Activated naive CD4-positive, alpha-beta T cell treated with anti-CD3 and anti-CD28 coated beads for 36 hours (primary cell): ENCODE measurements at regions of chr19 and their contacts with region 1.

Region 1: DNA sequence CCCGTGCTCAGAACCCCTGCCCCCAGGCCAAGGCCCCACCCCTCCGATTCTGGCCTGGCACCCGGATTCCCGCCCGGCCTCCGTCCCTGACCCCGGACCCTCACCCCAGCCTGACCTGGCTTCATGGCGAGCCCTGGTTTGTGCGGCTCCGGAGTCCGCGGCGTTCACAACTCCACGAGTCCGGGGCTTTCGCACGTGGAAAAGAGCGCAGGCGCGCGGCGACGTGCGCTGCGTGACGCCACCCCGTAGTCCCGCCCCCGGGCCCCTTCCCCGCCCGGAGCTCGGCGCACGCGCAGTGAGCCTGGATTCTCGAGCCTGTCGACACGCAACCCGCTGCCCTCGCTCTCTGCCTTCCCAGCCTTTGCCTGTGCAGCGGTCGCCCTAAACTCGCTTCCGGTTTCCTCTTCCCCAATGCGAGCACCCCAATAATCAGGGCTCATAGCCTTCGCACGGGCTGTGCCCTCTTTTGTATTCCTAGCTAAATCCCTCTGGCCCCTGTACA is at the start of gene FBL:
- DNase-seq: peak; percentile 98
- H3K4me3 Mint-ChIP-seq: peak within 1 kb of the TSS; percentile 91
- H3K27ac Mint-ChIP-seq: peak within 1 kb of the TSS; percentile 88
- H3K4me1 Mint-ChIP-seq: peaks cover 38% of the 10 kb centered on the region
- H3K27me3 Mint-ChIP-seq: no peaks in the 10 kb centered on the region
- total RNA-seq, gene FBL: 742 to 785 TPM

Region 2: DNA sequence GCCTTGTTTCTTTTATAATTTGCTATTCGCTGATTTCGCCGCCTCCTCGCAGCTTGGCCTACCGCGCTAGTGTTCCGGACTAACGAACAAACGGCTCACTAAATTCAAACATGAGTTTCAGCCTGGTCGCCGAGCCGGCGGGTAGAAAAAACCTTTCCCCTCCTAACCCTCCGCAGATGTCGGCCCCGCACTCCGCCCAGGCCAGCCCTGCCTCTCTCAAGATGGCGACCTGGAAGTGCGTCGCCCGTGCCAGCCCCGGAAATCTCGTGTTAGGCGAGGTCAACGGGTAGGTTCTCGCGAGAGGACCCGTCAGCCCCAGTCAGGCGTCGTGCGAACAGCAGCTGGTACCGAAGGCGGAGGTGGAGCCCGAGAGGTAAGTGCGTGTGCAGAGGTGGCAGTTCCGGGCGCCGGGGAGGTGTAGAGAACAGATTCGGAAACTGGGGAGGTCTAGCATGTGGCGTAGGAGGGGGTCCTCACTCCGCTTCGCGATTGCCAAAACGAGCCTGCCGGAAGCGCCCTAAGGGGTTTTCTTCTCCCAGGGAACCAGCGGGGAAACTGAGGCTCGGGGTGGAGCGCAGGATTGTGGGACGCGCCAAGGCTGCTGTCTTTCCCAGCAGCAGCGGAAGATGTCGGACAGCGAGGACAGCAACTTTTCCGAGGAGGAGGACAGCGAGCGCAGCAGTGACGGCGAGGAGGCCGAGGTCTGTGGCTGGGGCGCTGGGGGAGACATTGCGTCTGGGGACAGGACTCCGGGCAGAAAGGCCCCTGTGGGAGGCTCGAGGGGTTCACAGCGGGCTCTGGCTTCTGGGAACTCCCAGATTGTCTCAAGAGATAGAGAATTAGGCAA is 400.7 kb before region 1 on chr19 and contains the start of gene SUPT5H:
- CTCF ChIA-PET with region 1: no interaction called
- intact Hi-C with region 1: loop called (anchors 10 kb)
- DNase-seq: peak; percentile 99
- H3K4me3 Mint-ChIP-seq: peak within 1 kb of the TSS; percentile 99
- H3K27ac Mint-ChIP-seq: peak within 1 kb of the TSS; percentile 96
- H3K4me1 Mint-ChIP-seq: peaks cover 49% of the 10 kb centered on the region
- H3K27me3 Mint-ChIP-seq: no peaks in the 10 kb centered on the region
- total RNA-seq, gene SUPT5H: 129 to 139 TPM

Region 3: DNA sequence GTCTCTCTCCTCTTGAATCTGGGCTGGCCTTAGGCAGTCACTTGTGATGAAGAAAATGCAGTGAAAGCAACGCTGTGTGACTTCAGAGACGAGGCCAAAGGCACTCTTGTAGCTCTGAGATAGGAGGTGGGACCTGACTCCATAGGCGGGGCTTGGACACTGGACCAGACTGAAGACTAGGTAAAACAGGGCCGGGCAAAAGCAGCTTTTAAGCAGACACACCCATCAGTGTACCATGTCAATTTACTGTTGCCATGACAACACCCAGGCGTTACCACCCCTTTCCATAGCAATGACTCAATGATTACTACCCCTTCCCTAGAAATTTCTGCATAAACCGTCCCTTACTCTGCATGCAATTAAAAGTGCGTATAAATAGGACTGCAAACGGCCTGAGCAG is 299.6 kb before region 1 on chr19:
- CTCF ChIA-PET with region 1: interaction called, 13 read pairs
- intact Hi-C with region 1: loop called (anchors 10 kb)
- DNase-seq: no peak
- H3K4me3 Mint-ChIP-seq: no peak overlapping the region
- H3K27ac Mint-ChIP-seq: no peak overlapping the region
- H3K4me1 Mint-ChIP-seq: peaks cover 45% of the 10 kb centered on the region
- H3K27me3 Mint-ChIP-seq: no peaks in the 10 kb centered on the region

Region 4: DNA sequence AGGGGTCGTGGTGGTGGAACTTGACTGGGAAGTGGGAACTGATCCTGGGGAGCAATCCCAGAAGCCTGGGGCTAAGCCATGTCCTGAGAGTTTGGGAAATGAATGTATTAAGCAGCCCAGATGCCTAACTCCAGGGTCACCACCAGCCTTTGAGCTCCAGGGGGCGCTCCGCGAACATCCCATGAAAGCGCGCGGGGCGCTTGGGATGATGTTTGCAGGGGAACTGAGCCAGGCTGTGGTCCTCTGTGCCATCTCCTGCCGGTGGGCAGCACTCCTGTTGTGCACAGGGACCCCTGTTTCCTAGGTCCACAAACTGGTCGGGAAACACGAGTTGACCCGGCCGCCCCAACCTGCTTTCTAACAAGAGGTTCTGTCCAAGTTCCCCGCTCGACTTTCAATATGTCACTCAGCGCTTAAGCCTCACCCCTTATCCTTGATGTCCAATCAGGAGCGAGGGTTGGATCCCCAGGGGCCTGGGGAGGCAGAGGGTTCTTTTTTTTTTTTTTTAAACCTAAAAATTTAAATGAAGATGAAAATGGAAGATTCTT is 53.2 kb before region 1 on chr19:
- CTCF ChIA-PET with region 1: interaction called, 31 read pairs
- intact Hi-C with region 1: loop called (anchors 1 kb)
- DNase-seq: peak; percentile 85
- H3K4me3 Mint-ChIP-seq: peak overlapping the region; percentile 73
- H3K27ac Mint-ChIP-seq: no peak overlapping the region
- H3K4me1 Mint-ChIP-seq: no peaks in the 10 kb centered on the region
- H3K27me3 Mint-ChIP-seq: peaks cover 2% of the 10 kb centered on the region

Region 5: GRCh38 chr19:39858541-39858940 is 12.3 kb after region 1 on chr19:
- CTCF ChIA-PET with region 1: interaction called, 3 read pairs
- intact Hi-C with region 1: loop called (anchors 1 kb)
- DNase-seq: peak; percentile 82
- H3K4me3 Mint-ChIP-seq: peak overlapping the region; percentile 72
- H3K27ac Mint-ChIP-seq: peak overlapping the region; percentile 79
- H3K4me1 Mint-ChIP-seq: peaks cover 4% of the 10 kb centered on the region
- H3K27me3 Mint-ChIP-seq: no peaks in the 10 kb centered on the region

Region 6: DNA sequence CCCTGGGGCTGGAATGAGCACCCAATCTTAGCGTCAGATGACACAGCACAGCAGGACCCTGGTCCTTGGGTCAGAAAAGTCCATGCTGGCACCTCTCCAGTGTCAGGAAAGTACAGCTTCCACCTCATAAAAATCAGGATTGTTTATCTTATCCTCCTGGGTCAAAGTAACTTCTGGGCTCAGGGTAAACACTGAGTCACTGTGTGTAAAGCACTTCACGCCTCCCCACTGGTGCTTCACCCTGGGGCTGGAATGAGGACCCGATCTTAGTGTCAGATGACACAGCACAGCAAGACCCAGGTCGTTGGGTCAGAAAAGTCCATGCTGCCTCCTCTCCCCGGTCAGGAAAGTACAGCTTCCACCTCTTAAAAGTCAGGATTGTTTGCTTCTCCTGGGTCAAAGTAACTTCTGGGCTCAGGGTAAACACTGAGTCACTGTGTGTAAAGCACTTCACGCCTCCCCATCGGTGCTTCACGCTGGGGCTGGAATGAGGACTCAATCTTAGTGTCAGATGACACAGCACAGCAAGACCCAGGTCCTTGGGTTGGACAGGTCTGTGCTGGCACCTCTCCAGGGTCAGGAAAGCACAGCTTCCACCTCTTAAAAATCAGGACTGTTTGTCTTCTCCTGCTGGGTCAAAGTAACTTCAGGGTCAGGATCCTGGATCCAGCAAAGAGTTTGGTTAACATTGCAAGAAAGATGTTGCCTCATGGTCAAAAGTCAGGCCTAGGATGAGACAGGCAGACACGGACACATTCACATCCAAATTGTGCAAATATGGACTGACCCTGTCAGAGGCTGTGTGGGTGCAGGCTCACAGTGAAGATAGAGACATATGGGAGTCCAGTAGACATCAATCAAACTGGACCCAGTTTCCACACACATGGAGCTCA is 1075.0 kb after region 1 on chr19:
- CTCF ChIA-PET with region 1: no interaction called
- intact Hi-C with region 1: no loop called
- DNase-seq: no peak
- H3K4me3 Mint-ChIP-seq: no peak overlapping the region
- H3K27ac Mint-ChIP-seq: no peak overlapping the region
- H3K4me1 Mint-ChIP-seq: no peaks in the 10 kb centered on the region
- H3K27me3 Mint-ChIP-seq: no peaks in the 10 kb centered on the region